ENCODE measurements at regions of chr1 and their contacts with region 1.

Region 1: GRCh38 chr1:222892137-222892769 is 77.4 kb downstream of the DISP1 start:
- DNase-seq: no peak
- H3K4me3 ChIP-seq: no peak overlapping the region
- H3K27ac ChIP-seq: no peak overlapping the region
- H3K4me1 ChIP-seq: peaks cover 13% of the 10 kb centered on the region
- H3K27me3 ChIP-seq: no peaks in the 10 kb centered on the region
- CTCF ChIP-seq: no peak

Region 2: DNA sequence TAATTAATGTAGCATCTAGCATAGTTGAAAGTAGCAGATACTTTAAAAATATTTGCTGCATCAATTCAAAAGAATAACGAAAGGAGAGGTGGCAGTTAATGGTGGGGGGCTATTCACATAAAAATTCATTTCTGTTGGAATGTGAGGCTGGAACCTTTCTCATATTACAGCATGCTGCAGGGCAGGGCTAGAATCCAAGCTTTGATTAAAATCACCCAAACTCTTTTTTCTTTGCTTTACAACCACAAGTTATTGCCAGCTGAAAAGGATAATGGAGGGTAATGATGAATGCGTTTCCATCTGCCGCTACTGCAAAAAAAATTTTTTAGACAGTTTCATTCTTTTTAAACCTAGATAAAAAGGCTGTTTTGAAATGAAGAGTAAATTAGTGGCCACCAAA is 67.6 kb before region 1 on chr1:
- CTCF ChIA-PET with region 1: no interaction called
- dilution Hi-C with region 1: loop called (anchors 5 kb)
- in situ Hi-C with region 1: no loop called
- intact Hi-C with region 1: no loop called
- DNase-seq: no peak
- H3K4me3 ChIP-seq: no peak overlapping the region
- H3K27ac ChIP-seq: no peak overlapping the region
- H3K4me1 ChIP-seq: peaks cover 8% of the 10 kb centered on the region
- H3K27me3 ChIP-seq: no peaks in the 10 kb centered on the region
- CTCF ChIP-seq: no peak

Region 3: GRCh38 chr1:222852326-222852725 is 39.9 kb before region 1 on chr1:
- CTCF ChIA-PET with region 1: no interaction called
- dilution Hi-C with region 1: loop called (anchors 5 kb)
- in situ Hi-C with region 1: no loop called
- intact Hi-C with region 1: no loop called
- DNase-seq: no peak
- H3K4me3 ChIP-seq: no peak overlapping the region
- H3K27ac ChIP-seq: no peak overlapping the region
- H3K4me1 ChIP-seq: no peaks in the 10 kb centered on the region
- H3K27me3 ChIP-seq: no peaks in the 10 kb centered on the region
- CTCF ChIP-seq: no peak